HAP-1 (cell line): ENCODE measurements at regions of chr7 and their contacts with region 1.

Region 1: DNA sequence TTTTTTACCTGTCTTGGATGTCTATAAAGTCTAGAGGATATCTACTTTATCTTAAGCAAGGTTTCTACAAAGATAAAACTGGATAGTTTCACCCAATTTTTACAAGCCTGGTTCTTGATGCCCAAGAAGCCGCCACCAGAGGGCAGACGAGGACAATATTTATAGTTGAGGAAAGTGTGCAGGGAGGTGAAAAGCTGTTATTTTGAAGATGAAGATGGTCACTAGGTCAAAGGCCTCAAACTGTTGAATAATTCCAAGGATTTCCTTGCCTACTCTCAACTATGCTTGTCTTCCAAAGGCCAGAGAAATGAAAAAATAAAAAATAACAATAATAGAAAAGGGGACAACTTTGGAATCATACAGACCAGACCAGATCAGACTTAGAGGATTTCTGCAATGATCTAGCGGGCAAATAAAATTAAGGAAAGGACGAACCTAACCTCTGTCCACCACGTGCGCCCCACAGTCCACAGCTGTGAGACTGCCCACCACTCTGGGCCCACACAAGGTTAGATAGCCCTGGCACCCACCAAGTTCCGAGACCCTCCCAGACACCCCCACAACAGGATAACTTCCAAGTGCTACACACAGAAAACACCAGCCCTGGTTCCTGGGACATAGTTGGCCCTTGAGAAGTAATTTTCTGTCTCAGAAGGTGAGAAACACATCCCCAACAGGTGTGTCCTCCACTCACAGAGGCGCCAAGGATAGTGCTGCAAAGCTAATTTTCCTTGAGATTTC is 2.8 kb downstream of the PKD1L1 start:
- DNase-seq: peak; percentile 28 to 88
- H3K4me3 ChIP-seq: no peak overlapping the region
- H3K4me1 ChIP-seq: no peaks in the 10 kb centered on the region
- H3K27me3 ChIP-seq: no peaks in the 10 kb centered on the region

Region 2: DNA sequence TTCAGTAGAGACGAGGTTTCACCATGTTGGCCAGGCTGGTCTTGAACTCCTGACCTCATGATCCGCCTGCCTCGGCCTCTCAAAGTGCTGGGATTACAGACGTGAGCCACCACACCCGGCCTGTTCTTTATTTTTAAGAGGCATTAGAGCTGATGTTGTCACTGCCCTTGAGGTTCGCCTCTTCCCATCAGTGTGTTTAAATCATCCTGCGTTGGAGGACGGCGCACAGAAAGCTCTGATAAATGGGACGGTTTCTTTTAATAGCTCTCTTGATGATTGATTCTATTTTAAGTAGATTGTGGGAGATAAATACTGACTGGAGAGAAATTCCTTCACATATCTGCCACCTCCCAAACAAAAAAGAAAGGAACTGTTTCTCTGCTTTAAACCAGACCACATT is 172.6 kb after region 1 on chr7:
- in situ Hi-C with region 1: loop called (anchors 5 kb)
- DNase-seq: no peak
- H3K4me3 ChIP-seq: no peak overlapping the region
- H3K4me1 ChIP-seq: no peaks in the 10 kb centered on the region
- H3K27me3 ChIP-seq: no peaks in the 10 kb centered on the region

Region 3: DNA sequence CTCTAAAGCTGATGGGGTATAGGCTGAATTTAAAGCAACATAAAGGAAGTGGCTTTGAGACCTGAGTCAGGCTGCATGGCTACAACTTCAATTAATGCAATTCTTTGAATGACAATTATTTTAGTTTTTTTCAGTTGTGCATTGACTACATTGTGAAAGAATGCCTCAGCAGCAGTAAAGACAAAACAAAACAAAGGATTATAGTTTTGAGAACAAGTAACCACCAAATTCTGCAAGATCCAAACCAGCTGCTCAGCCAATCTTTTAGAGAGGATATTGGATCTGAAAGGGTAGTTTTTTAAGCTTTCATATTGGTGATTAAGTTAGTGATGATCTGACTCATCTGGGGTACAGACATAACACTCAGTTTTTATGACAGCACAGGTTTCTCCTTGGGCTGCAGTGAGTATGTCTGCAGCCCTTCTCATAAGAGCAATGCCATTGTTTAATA is 185.3 kb after region 1 on chr7:
- in situ Hi-C with region 1: no loop called
- DNase-seq: no peak
- H3K4me3 ChIP-seq: no peak overlapping the region
- H3K4me1 ChIP-seq: peaks cover 9% of the 10 kb centered on the region
- H3K27me3 ChIP-seq: no peaks in the 10 kb centered on the region